Panc1 (cell line): ENCODE measurements at regions of chr5 and their contacts with region 1.

Region 1: GRCh38 chr5:175025077-175025476 is 300.7 kb downstream of the MSX2 start:
- DNase-seq: no peak
- ATAC-seq: no peak
- H3K4me3 ChIP-seq: no peak overlapping the region
- H3K27ac ChIP-seq: no peak overlapping the region
- H3K4me1 ChIP-seq: no peaks in the 10 kb centered on the region
- H3K27me3 ChIP-seq: no peaks in the 10 kb centered on the region
- CTCF ChIP-seq: no peak

Region 2: GRCh38 chr5:174922955-174923354 is 102.1 kb before region 1 on chr5:
- CTCF ChIA-PET with region 1: no interaction called
- POLR2A ChIA-PET with region 1: interaction called, 11 read pairs
- in situ Hi-C with region 1: no loop called
- intact Hi-C with region 1: no loop called
- DNase-seq: no peak
- ATAC-seq: no peak
- H3K4me3 ChIP-seq: no peak overlapping the region
- H3K27ac ChIP-seq: no peak overlapping the region
- H3K4me1 ChIP-seq: no peaks in the 10 kb centered on the region
- H3K27me3 ChIP-seq: 0 out of 2 replicates have a peak, but pooled peaks cover 2% of the 10 kb centered on the region
- CTCF ChIP-seq: no peak